Dendritic cell treated with granulocyte-macrophage colony-stimulating factor and Interleukin-4, amounts not matched to agents 40 ng/mL and 50 ng/mL, for 4 days (primary cell): ENCODE measurements at regions of chr1 and their contacts with region 1.

Region 1: GRCh38 chr1:39538588-39539465 is 37.8 kb downstream of the PABPC4 start:
- H3K4me3 Mint-ChIP-seq: no peak overlapping the region
- H3K27ac Mint-ChIP-seq: no peak overlapping the region
- H3K4me1 Mint-ChIP-seq: peaks cover 31% of the 10 kb centered on the region
- H3K27me3 Mint-ChIP-seq: no peaks in the 10 kb centered on the region

Region 2: GRCh38 chr1:39478126-39478915 is 60.5 kb before region 1 on chr1:
- intact Hi-C with region 1: loop called (anchors 10 kb)
- H3K4me3 Mint-ChIP-seq: no peak overlapping the region
- H3K27ac Mint-ChIP-seq: no peak overlapping the region
- H3K4me1 Mint-ChIP-seq: no peaks in the 10 kb centered on the region
- H3K27me3 Mint-ChIP-seq: no peaks in the 10 kb centered on the region

Region 3: GRCh38 chr1:39575191-39576015 is 36.6 kb after region 1 on chr1:
- intact Hi-C with region 1: loop called (anchors 5 kb)
- H3K4me3 Mint-ChIP-seq: peak overlapping the region; percentile 90
- H3K27ac Mint-ChIP-seq: peak overlapping the region; percentile 89
- H3K4me1 Mint-ChIP-seq: peaks cover 28% of the 10 kb centered on the region
- H3K27me3 Mint-ChIP-seq: peaks cover 5% of the 10 kb centered on the region